ENCODE measurements at regions of chr1 and their contacts with region 1.

Region 1: DNA sequence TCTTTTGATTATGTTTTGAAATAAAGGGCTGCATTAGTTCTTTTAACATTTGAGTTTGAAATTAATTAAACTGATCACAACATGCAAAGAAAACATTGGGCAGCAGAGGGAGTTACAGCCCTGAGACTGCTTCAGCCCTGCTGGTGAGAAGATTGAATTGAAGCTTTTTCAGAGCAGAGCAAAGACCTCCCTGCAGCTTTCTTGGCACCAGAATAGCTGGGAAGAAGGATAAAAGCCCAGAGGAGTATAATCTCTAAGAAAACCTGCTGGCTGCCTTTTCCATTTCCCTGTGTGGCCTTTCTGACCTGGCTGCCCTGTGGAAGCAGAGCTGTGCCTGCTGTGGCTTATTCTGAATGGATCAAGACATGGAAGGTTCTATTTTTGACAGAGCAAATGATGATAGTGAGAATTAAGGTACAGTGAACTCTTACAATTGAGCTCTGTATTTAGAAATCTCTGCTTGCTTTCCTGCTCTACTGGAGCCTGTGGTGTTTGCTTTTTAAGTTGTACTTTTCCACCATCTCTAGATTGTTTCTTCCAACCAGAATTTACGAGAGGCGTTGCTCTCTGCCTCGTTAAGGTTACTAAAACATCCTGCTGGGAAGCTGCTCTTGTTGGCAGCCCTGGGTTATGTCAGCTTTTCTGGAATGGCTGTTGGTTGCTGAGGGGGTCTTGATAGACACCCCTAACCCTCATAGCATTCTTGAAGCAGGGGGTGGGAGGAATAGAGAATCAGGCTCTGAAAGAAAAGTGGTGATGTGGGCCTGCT is 9.9 kb downstream of the SNRPE start:
- DNase-seq: no peak
- H3K4me3 ChIP-seq: no peak overlapping the region
- CTCF ChIP-seq: peak; percentile 91

Region 2: DNA sequence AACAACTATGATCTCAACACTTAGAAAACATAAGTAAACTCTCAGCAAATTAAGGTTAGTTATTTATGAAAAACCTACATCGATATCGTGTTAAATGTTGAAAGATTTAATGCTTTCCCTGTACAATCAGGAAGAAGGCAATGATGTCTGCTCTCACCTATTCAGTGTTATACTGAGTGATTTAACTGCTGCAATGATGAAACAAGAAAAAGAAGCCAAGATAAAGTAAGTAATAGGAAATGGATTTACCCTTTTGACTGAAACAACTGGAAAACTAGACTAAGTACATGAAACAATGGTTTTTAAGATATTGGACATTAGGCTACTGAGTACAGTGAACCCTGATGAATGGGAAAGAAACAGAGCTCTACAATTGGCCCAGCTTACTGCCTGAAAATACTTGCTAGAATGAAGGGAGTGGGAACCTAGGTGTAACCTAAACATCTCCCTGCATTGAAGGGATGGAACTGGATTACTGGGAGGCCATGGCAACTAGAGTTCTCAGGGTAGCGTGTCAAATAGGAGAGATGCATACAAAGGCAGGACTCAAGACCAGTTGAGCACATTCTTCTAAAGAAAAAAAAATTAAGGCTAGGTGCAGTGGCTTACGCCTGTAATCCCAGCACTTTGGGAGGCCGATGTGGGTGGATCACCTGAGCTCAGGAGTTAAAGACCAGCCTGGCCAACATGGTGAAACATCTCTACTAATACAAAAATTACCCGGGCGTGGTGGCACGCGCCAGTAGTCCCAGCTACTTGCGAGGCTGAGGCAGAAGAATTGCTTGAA is 27.4 kb after region 1 on chr1:
- CTCF ChIA-PET with region 1: interaction called, 10 read pairs
- POLR2A ChIA-PET with region 1: no interaction called
- DNase-seq: no peak
- H3K4me3 ChIP-seq: no peak overlapping the region
- CTCF ChIP-seq: no peak

Region 3: DNA sequence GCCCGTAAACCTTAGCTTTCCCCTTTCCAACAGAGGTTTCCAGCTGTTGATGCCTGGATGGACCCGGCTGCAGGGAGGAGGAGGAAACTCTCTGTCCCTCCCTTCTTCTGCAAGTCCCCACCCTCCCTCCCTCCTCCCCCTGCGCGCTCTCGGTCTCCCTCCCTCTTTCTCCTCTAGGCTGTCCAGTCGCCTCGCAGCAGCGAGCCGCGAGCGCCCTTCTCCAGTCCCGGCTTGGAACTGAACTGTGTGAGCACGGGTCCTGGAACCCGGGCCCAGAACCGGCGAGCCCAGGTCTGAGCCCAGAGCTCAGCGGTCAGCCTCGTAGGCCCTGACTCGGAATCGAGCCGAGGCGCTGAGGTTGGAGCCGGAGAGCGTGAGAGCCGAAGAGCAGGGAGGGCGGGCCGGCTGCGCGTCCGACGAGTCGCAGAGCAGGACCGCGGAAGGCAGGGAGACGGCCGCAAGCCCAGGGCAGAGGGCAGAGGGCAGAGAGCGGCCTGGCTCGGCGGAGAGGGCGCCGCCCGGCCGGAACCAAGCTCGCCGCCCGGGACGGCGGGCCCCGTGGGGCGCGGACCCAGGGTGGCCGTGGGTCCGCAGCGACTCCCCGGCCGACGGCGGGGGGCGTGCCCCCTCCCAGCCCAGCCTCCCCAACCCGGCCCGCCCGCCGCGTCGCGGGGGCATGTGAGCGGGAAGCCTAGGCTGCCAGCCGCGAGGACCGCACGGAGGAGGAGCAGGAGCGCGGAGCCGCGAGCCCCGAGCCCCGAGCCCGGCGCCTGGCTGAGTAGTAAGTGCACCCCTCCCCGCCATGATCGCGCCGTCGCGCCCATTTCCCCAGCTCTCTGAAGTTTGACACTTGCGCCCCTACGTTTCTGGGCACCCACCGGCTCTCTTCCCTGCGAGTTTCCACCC is 201.9 kb after region 1 on chr1 and contains the start of gene SOX13:
- CTCF ChIA-PET with region 1: interaction called, 25 read pairs
- POLR2A ChIA-PET with region 1: no interaction called
- DNase-seq: peak; percentile 34
- H3K4me3 ChIP-seq: peak within 1 kb of the TSS; percentile 74
- CTCF ChIP-seq: peak; percentile 27

Region 4: GRCh38 chr1:204114606-204115005 is 243.3 kb after region 1 on chr1:
- CTCF ChIA-PET with region 1: interaction called, 1,069 read pairs
- POLR2A ChIA-PET with region 1: no interaction called
- DNase-seq: no peak
- H3K4me3 ChIP-seq: no peak overlapping the region
- CTCF ChIP-seq: no peak